ENCODE measurements at regions of chr2 and their contacts with region 1.

Region 1: DNA sequence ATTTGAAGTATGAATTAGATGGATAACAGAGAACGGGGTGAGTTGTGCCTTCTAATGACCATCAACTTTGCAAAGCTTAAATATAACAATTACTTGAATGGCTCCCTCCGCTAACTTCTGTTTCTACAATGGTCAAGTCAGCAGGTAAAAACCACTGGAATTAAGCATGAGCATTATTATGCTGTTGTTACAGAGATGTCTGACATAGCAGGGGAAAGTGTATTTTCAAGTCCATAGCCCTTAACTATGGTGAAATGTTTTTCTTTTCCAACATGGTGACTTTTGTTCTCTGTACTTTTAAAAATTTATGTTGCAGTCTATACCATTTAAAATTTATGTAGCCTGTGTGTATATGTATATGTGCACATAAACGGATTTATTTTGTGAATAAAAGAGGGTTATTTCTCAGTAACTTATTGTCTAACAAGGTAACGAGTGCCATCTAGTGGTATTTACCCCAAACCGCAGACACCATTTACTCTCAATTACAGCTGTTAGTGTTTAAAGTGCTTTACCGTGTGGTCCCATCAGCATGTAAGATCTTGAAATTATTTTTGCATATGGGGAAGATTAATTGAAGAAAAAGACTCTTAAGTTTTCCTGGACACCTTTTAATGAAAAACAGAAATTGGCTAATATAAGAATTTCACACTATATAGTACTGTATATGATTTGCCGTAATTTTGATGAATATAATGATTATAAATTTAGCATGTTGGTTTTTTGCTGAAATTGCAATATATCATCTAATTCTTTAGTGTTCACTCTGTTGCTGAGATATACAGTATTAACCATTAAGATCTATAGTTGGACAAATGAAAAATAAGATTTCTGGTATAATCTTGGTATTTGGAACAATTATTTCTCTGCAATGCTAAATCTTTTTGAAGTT is 78.2 kb downstream of the UBE2E3 start:
- DNase-seq: peak; percentile 43 to 55 (median 50)
- ATAC-seq: peak; percentile 89
- H3K4me3 ChIP-seq: no peak overlapping the region
- H3K27ac ChIP-seq: no peak overlapping the region
- H3K4me1 ChIP-seq: no peaks in the 10 kb centered on the region
- H3K27me3 ChIP-seq: no peaks in the 10 kb centered on the region
- CTCF ChIP-seq: peak; percentile 48 to 86 (median 74); a peak in 5 of 6 replicates
- EP300 ChIP-seq: no peak
- POLR2A ChIP-seq: no peak
- RAD21 ChIP-seq: peak; percentile 93

Region 2: GRCh38 chr2:180679693-180680092 is 378.9 kb before region 1 on chr2:
- CTCF ChIA-PET with region 1: no interaction called
- POLR2A ChIA-PET with region 1: no interaction called
- in situ Hi-C with region 1: no loop called
- intact Hi-C with region 1: loop called (anchors 10 kb)
- DNase-seq: no peak
- ATAC-seq: no peak
- H3K4me3 ChIP-seq: no peak overlapping the region
- H3K27ac ChIP-seq: no peak overlapping the region
- H3K4me1 ChIP-seq: no peaks in the 10 kb centered on the region
- H3K27me3 ChIP-seq: no peaks in the 10 kb centered on the region
- CTCF ChIP-seq: no peak
- EP300 ChIP-seq: no peak
- POLR2A ChIP-seq: no peak
- RAD21 ChIP-seq: no peak